ENCODE measurements at regions of chr20 and their contacts with region 1.

Region 1: GRCh38 chr20:23350196-23350903 is at the start of gene NXT1:
- DNase-seq: peak; percentile 98
- H3K4me3 ChIP-seq: peak within 1 kb of the TSS; percentile 96
- H3K27ac ChIP-seq: peak within 1 kb of the TSS; percentile 88
- H3K4me1 ChIP-seq: peaks cover 10% of the 10 kb centered on the region
- H3K27me3 ChIP-seq: no peaks in the 10 kb centered on the region
- CTCF ChIP-seq: no peak
- total RNA-seq, gene NXT1: 32.1 and 34.4 TPM in 2 replicates

Region 2: GRCh38 chr20:23050847-23051631 is 299.3 kb before region 1 on chr20:
- CTCF ChIA-PET with region 1: no interaction called
- POLR2A ChIA-PET with region 1: no interaction called
- intact Hi-C with region 1: loop called (anchors 10 kb)
- DNase-seq: peak; percentile 66
- H3K4me3 ChIP-seq: no peak overlapping the region
- H3K27ac ChIP-seq: no peak overlapping the region
- H3K4me1 ChIP-seq: no peaks in the 10 kb centered on the region
- H3K27me3 ChIP-seq: peaks cover 96% of the 10 kb centered on the region
- CTCF ChIP-seq: peak; percentile 57

Region 3: GRCh38 chr20:23334111-23334510 is 16.2 kb before region 1 on chr20:
- CTCF ChIA-PET with region 1: no interaction called
- POLR2A ChIA-PET with region 1: no interaction called
- intact Hi-C with region 1: no loop called
- DNase-seq: no peak
- H3K4me3 ChIP-seq: no peak overlapping the region
- H3K27ac ChIP-seq: no peak overlapping the region
- H3K4me1 ChIP-seq: peaks cover 4% of the 10 kb centered on the region
- H3K27me3 ChIP-seq: no peaks in the 10 kb centered on the region
- CTCF ChIP-seq: no peak